ENCODE measurements at regions of chr1 and their contacts with region 1.

Region 1: GRCh38 chr1:36463803-36464604 is at the start of gene MRPS15:
- DNase-seq: peak; percentile 82
- H3K4me3 ChIP-seq: peak within 1 kb of the TSS; percentile 91
- H3K27ac ChIP-seq: peak within 1 kb of the TSS; percentile 84
- H3K27me3 ChIP-seq: no peaks in the 10 kb centered on the region
- CTCF ChIP-seq: no peak
- polyA plus RNA-seq, gene MRPS15: 64.8 and 73.5 TPM in 2 replicates

Region 2: GRCh38 chr1:36450270-36450918 is 13.6 kb before region 1 on chr1 and contains the start of gene OSCP1:
- CTCF ChIA-PET with region 1: interaction called, 3 read pairs
- POLR2A ChIA-PET with region 1: interaction called, 24 read pairs
- DNase-seq: peak; percentile 87
- H3K4me3 ChIP-seq: peak within 1 kb of the TSS; percentile 70
- H3K27ac ChIP-seq: peak within 1 kb of the TSS; percentile 82
- H3K27me3 ChIP-seq: no peaks in the 10 kb centered on the region
- CTCF ChIP-seq: no peak
- polyA plus RNA-seq, gene OSCP1: 7.9 and 8.1 TPM in 2 replicates

Measured in AG04450 (cell line).